ENCODE measurements at regions of chr2 and their contacts with region 1.

Region 1: DNA sequence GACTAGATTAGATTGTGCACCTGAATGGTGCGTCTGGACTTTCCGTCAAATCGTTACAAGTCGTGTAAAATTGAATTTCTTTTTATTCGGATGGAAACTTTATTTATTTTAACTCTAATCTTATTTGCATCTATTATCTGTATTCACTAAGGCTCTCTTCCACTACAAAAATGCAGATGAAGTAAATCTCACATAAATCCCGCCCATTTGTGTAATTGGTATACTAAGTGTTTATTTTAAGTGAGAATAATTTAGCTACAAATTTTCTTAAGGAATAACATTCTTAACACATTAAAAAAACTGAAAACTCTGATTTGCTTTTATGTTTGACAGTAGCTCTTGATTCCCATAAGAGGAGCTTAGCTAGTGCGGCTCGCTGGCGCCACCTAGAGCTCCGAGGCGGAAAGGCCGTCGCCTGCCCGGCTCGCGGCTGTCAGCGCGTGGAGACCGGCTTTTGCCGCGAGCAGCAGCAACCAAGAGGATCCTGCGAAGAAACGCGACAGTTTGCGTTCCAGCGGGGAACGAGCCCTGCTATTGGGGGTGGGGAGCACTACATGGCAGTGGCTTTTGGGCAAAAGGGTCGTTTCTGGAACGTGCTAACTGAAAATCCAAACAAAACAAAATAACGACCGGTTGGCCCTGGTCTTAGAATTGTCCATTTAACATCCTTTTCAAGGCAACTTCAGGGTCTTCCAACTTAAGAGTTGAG is 6.7 kb downstream of the SP9 start:
- DNase-seq: peak; percentile 78
- ATAC-seq: peak; percentile 86
- H3K4me3 ChIP-seq: no peak overlapping the region
- H3K27ac ChIP-seq: no peak overlapping the region
- H3K4me1 ChIP-seq: peaks cover 10% of the 10 kb centered on the region; the same call in 1 of the 2 replicates
- H3K27me3 ChIP-seq: peaks cover 76% of the 10 kb centered on the region
- CTCF ChIP-seq: peak; percentile 99
- POLR2A ChIP-seq: no peak
- RAD21 ChIP-seq: peak; percentile 97

Region 2: GRCh38 chr2:172806493-172806892 is 1534.9 kb before region 1 on chr2:
- CTCF ChIA-PET with region 1: no interaction called
- POLR2A ChIA-PET with region 1: no interaction called
- dilution Hi-C with region 1: no loop called
- in situ Hi-C with region 1: loop called (anchors 25 kb)
- intact Hi-C with region 1: no loop called
- DNase-seq: peak; percentile 68
- ATAC-seq: peak; percentile 85
- H3K4me3 ChIP-seq: no peak overlapping the region
- H3K27ac ChIP-seq: no peak overlapping the region
- H3K4me1 ChIP-seq: no peaks in the 10 kb centered on the region
- H3K27me3 ChIP-seq: no peaks in the 10 kb centered on the region
- CTCF ChIP-seq: peak; percentile 92
- POLR2A ChIP-seq: peak; percentile 53; the same call in 1 of the 2 replicates
- RAD21 ChIP-seq: peak; percentile 96

Region 3: GRCh38 chr2:173027181-173028128 is 1314.0 kb before region 1 on chr2:
- CTCF ChIA-PET with region 1: no interaction called
- POLR2A ChIA-PET with region 1: no interaction called
- dilution Hi-C with region 1: no loop called
- in situ Hi-C with region 1: no loop called
- intact Hi-C with region 1: loop called (anchors 5 kb)
- DNase-seq: peak; percentile 93
- ATAC-seq: peak; percentile 77
- H3K4me3 ChIP-seq: no peak overlapping the region
- H3K27ac ChIP-seq: peak overlapping the region; percentile 99; the same call in 1 of the 2 replicates
- H3K4me1 ChIP-seq: peaks cover 9% of the 10 kb centered on the region
- H3K27me3 ChIP-seq: no peaks in the 10 kb centered on the region
- CTCF ChIP-seq: peak; percentile 96
- POLR2A ChIP-seq: peak; percentile 51; the same call in 1 of the 2 replicates
- RAD21 ChIP-seq: peak; percentile 98

Region 4: DNA sequence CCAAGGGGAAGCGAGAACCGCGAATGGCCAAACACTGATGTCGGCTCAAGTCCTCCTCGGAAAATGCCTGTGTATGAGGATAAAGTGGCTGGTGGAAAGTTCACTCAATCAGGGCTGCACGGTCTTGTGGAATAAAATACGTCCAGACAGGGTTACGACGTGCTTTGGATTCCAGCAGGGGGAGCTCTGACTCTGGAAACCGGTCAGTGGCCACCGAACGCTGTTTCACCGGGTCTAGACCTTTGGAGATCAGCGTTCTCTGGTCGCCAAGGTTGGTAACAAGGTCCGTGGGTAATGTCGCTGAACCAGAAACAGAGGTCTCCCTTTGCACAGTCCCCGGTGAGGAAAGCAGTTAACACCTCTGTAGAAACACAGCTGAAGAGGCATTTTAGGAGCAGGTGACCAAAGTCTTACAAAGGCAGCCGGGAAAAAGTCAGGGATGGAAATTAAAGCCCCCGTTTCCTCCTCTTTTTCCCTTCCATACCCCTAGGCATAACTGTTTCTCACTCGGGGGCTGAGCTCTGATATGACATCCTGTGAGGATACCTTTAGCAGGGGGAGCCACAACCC is 939.0 kb before region 1 on chr2:
- CTCF ChIA-PET with region 1: interaction called, 11 read pairs
- POLR2A ChIA-PET with region 1: no interaction called
- dilution Hi-C with region 1: no loop called
- in situ Hi-C with region 1: loop called (anchors 5 kb)
- intact Hi-C with region 1: loop called (anchors 1 kb)
- DNase-seq: peak; percentile 79
- ATAC-seq: peak; percentile 99
- H3K4me3 ChIP-seq: no peak overlapping the region
- H3K27ac ChIP-seq: no peak overlapping the region
- H3K4me1 ChIP-seq: no peaks in the 10 kb centered on the region
- H3K27me3 ChIP-seq: peaks cover 53% of the 10 kb centered on the region
- CTCF ChIP-seq: peak; percentile 96
- POLR2A ChIP-seq: no peak
- RAD21 ChIP-seq: peak; percentile 96

Region 5: GRCh38 chr2:173590271-173590861 is 751.1 kb before region 1 on chr2:
- CTCF ChIA-PET with region 1: no interaction called
- POLR2A ChIA-PET with region 1: no interaction called
- dilution Hi-C with region 1: no loop called
- in situ Hi-C with region 1: loop called (anchors 25 kb)
- intact Hi-C with region 1: no loop called
- DNase-seq: peak; percentile 98
- ATAC-seq: peak; percentile 95
- H3K4me3 ChIP-seq: no peak overlapping the region
- H3K27ac ChIP-seq: 0 out of 2 replicates have a peak overlapping the region, but pooled peaks have one; percentile 21
- H3K4me1 ChIP-seq: peaks cover 3% of the 10 kb centered on the region; the same call in 1 of the 2 replicates
- H3K27me3 ChIP-seq: no peaks in the 10 kb centered on the region
- CTCF ChIP-seq: no peak
- POLR2A ChIP-seq: no peak
- RAD21 ChIP-seq: no peak

Region 6: DNA sequence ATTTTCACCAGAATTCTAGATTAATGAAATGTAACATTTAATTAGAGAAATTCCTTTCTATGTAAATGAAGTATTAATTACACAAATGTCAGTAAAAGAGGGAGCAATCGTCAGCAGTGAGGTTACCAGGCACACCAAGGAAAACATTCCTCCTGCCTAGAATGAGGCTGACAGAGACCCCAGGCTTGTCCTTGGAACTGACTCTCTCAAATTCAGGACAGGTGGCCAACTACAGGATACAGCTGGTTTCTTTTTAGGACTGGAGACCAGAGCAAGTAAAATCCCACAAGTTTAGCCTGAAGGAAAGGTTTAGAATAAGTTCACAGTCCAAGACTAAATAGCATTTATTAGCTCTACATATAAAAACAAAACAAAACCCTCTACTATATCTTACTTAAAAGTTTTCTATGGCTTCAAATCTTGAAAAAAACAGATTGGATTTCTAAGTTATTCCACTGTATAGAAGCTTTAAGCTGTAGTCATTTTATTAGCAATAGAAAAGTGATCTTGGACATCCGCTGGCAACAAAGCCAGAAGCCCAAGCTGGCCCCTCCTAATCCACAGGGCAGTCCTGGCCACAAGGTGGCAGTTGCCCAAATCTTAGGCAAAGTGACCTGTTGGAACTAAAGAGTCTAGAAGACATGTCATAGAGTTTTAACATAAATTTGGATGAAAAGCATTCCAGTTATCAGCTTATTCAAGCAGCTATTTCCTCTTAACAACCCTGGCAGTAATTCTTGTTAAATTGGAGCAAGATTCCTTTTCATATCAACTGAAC is 457.2 kb before region 1 on chr2:
- CTCF ChIA-PET with region 1: interaction called, 5 read pairs
- POLR2A ChIA-PET with region 1: no interaction called
- dilution Hi-C with region 1: no loop called
- in situ Hi-C with region 1: loop called (anchors 10 kb)
- intact Hi-C with region 1: loop called (anchors 1 kb)
- DNase-seq: peak; percentile 32
- ATAC-seq: peak; percentile 59; the same call in 1 of the 2 replicates
- H3K4me3 ChIP-seq: no peak overlapping the region
- H3K27ac ChIP-seq: no peak overlapping the region
- H3K4me1 ChIP-seq: no peaks in the 10 kb centered on the region
- H3K27me3 ChIP-seq: peaks cover 12% of the 10 kb centered on the region
- CTCF ChIP-seq: peak; percentile 53
- POLR2A ChIP-seq: no peak
- RAD21 ChIP-seq: peak; percentile 54

Region 7: DNA sequence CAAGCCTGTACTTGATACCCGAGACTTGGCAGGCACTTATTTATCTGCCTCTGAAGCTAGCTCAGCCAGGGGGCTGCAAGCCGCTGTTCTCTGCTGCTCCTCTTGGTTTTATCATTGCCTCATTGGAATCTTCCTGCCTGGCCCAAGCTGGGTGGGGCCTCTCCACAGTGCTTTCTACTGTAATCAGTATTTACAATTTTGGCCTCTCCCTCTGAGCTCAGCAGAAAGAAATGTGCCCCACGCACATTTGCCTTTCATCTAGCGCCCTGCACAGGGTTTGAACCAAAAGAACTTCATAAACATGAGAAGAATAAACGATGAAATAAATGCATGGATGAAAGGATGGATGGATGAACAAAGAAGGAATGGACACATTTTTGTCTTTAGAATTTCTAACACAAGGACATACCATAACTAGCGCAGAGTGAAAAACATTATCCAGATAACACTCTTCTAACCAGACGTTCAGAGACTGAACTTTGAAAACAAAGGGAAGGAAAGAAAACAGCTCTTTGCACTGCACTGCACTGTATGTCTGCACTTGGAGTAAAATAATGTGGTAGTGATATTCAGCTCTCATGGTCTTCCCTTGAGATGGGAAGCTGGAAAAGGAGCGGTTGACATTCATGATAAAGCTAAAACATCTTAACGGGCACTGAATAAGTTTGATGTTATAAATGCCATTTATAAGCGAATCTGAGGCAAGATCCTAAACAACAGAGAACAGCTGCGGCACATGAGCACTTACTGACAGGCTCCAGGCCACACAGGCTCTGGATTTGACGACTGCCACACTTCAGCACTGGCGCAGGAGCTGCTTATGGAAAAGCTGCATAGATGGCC is 289.5 kb before region 1 on chr2:
- CTCF ChIA-PET with region 1: no interaction called
- POLR2A ChIA-PET with region 1: no interaction called
- dilution Hi-C with region 1: no loop called
- in situ Hi-C with region 1: no loop called
- intact Hi-C with region 1: loop called (anchors 5 kb)
- DNase-seq: peak; percentile 83
- ATAC-seq: peak; percentile 95
- H3K4me3 ChIP-seq: no peak overlapping the region
- H3K27ac ChIP-seq: peak overlapping the region; percentile 58
- H3K4me1 ChIP-seq: peaks cover 18% of the 10 kb centered on the region
- H3K27me3 ChIP-seq: no peaks in the 10 kb centered on the region
- CTCF ChIP-seq: 0 out of 2 replicates have a peak, but pooled peaks have one; percentile 22
- POLR2A ChIP-seq: no peak
- RAD21 ChIP-seq: peak; percentile 25; the same call in 1 of the 2 replicates

Measured in IMR-90 (cell line).